Heart left ventricle (tissue), 16 donors: ENCODE measurements at regions of chr3 and their contacts with region 1.

Region 1: DNA sequence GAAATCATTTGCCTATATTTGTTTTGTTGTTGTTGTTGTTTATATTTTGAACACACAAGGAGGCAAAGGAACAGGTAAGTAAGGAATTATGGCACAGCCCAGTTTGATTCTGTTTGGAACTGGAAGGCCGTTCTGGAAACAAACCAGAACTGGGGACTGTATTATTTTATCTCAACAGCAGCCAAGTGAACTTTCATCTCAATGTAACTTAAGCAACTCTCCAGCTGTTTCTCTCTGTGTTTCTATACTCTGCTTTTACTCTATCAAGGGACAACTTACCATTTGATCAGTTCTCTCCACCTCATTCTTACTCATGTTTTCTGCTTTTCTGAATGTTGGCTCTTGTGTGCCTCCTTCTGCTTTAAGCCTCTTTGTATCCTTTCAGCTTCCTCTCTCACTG is 16.0 kb upstream of the WDR49 start:
- DNase-seq: no peak
- ATAC-seq: peak in 1 of 4 donors; percentile 26
- H3K4me3 ChIP-seq: no peak overlapping the region
- H3K27ac ChIP-seq: no peak overlapping the region
- H3K4me1 ChIP-seq: no peaks in the 10 kb centered on the region
- H3K27me3 ChIP-seq: no peaks in the 10 kb centered on the region
- CTCF ChIP-seq: no peak
- POLR2A ChIP-seq: no peak

Region 2: GRCh38 chr3:167394003-167394402 is 275.7 kb before region 1 on chr3:
- intact Hi-C with region 1: loop called in 1 of 10 experiments (anchors 5 kb)
- DNase-seq: no peak
- ATAC-seq: no peak
- H3K4me3 ChIP-seq: no peak overlapping the region
- H3K27ac ChIP-seq: no peak overlapping the region
- H3K4me1 ChIP-seq: no peaks in the 10 kb centered on the region
- H3K27me3 ChIP-seq: no peaks in the 10 kb centered on the region
- CTCF ChIP-seq: no peak
- POLR2A ChIP-seq: no peak

Region 3: GRCh38 chr3:167705840-167706239 is 36.1 kb after region 1 on chr3:
- intact Hi-C with region 1: no loop called
- DNase-seq: no peak
- ATAC-seq: no peak
- H3K4me3 ChIP-seq: no peak overlapping the region
- H3K27ac ChIP-seq: no peak overlapping the region
- H3K4me1 ChIP-seq: no peaks in the 10 kb centered on the region
- H3K27me3 ChIP-seq: no peaks in the 10 kb centered on the region
- CTCF ChIP-seq: no peak
- POLR2A ChIP-seq: no peak

Region 4: GRCh38 chr3:167728176-167728575 is 58.5 kb after region 1 on chr3:
- intact Hi-C with region 1: no loop called
- DNase-seq: no peak
- ATAC-seq: peak; percentile 33 to 71 (median 65)
- H3K4me3 ChIP-seq: no peak overlapping the region
- H3K27ac ChIP-seq: peak overlapping the region in 10 of 12 donors; percentile 8 to 67 (median 42)
- H3K4me1 ChIP-seq: peaks cover 0 to 68% (median 48%) of the 10 kb centered on the region in 12 donors
- H3K27me3 ChIP-seq: no peaks in the 10 kb centered on the region
- CTCF ChIP-seq: no peak
- POLR2A ChIP-seq: no peak

Region 5: GRCh38 chr3:167783781-167784180 is 114.1 kb after region 1 on chr3:
- intact Hi-C with region 1: no loop called
- DNase-seq: peak in 3 of 5 donors; percentile 11 to 45 (median 19)
- ATAC-seq: peak; percentile 61 to 83 (median 74)
- H3K4me3 ChIP-seq: no peak overlapping the region
- H3K27ac ChIP-seq: peak overlapping the region in 3 of 12 donors; percentile 25 to 50 (median 40)
- H3K4me1 ChIP-seq: peaks cover 0 to 24% (median 2%) of the 10 kb centered on the region in 12 donors
- H3K27me3 ChIP-seq: no peaks in the 10 kb centered on the region
- CTCF ChIP-seq: no peak
- POLR2A ChIP-seq: no peak

Region 6: DNA sequence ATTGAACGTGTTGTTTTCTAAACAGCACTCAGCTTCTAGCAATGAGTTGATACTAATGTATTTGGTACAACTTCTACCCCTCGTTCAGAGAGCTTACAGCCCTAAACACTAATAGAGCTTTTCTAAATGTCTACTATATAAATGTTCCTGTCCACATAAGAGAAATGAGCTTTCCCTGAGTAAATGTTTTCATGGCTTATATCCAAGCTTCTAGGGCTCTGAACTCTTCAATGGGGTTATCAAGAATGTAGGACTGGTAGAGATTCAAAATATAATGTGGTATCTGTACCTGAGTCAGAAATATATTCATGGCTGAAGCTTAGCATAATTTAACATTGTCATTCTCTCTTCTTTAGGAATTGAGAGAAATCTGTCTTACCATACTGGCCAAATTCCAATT is 139.2 kb after region 1 on chr3:
- intact Hi-C with region 1: no loop called
- DNase-seq: no peak
- ATAC-seq: no peak
- H3K4me3 ChIP-seq: peak overlapping the region in 4 of 12 donors; percentile 3 to 30 (median 20)
- H3K27ac ChIP-seq: peak overlapping the region in 1 of 12 donors; percentile 16
- H3K4me1 ChIP-seq: peaks cover 3 to 25% (median 12%) of the 10 kb centered on the region in 12 donors
- H3K27me3 ChIP-seq: no peaks in the 10 kb centered on the region
- CTCF ChIP-seq: no peak
- POLR2A ChIP-seq: no peak